SK-N-SH (cell line): ENCODE measurements at regions of chrX and their contacts with region 1.

Region 1: DNA sequence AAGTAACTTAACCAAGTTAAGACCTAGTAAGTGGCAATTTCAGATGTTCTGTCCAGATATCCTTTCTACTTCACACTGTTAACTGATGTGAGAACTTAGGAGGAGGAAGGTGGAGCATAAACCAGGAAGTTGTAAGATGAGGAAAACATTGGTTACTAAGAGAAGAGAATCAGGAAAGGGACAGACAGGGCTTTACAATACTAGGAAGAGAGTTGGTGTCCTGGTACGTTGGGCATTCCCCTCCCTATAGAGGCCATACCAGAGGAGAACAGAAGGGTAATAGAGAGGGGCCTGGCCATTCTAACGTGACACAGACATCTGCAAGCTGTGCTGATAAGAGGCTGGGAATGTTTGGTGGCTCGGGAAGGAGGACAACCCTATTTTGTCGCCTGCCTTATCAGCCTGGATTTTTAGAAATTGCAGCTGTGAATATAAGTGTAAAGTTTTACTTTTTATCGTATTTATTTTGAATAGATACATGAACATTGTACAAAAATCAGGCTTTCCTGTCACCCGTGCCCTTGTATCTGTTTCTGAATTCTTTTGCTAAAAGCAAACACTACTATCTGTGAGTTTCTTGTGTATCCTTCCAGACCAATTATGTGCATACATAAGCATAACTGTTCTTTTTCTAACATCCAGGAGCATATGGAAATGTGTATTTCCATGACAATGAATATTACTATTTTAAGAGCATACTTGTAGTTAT is 53.5 kb upstream of the HPRT1 start:
- DNase-seq: peak; percentile 44
- H3K4me3 ChIP-seq: no peak overlapping the region
- H3K27ac ChIP-seq: no peak overlapping the region
- H3K4me1 ChIP-seq: peaks cover 0 to 6% of the 10 kb centered on the region in 2 experiments; a peak in 2 of 4 replicates
- H3K27me3 ChIP-seq: no peaks in the 10 kb centered on the region
- CTCF ChIP-seq: no peak
- EP300 ChIP-seq: no peak
- RAD21 ChIP-seq: no peak

Region 2: GRCh38 chrX:134396174-134396573 is 10.3 kb before region 1 on chrX:
- CTCF ChIA-PET with region 1: interaction called, 22 read pairs
- POLR2A ChIA-PET with region 1: no interaction called
- DNase-seq: peak; percentile 38
- H3K4me3 ChIP-seq: no peak overlapping the region
- H3K27ac ChIP-seq: peak overlapping the region in 1 of 2 experiments; percentile 58; a peak in 1 of 4 replicates
- H3K4me1 ChIP-seq: no peaks in the 10 kb centered on the region; a peak in 1 of 4 replicates
- H3K27me3 ChIP-seq: no peaks in the 10 kb centered on the region
- CTCF ChIP-seq: peak; percentile 93
- EP300 ChIP-seq: no peak
- RAD21 ChIP-seq: peak; percentile 71

Region 3: DNA sequence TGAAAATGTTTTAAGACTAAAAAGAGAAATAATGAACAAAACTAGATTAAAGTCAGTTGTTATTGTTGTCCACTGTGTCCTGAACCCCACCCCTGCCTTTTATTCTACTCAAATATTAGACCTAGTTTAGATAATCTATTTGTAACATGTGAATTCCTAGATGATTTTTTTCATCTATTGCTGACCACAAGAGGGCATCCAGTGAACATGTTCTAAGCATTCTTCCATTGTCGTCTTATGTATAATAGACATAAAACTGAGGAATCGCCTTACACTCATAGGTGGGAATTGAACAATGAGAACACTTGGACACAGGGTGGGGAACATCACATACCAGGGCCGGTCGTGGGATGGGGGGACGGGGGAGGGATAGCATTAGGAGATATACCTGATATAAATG is 17.1 kb after region 1 on chrX:
- CTCF ChIA-PET with region 1: interaction called, 10 read pairs
- POLR2A ChIA-PET with region 1: no interaction called
- DNase-seq: peak; percentile 5
- H3K4me3 ChIP-seq: no peak overlapping the region
- H3K27ac ChIP-seq: no peak overlapping the region
- H3K4me1 ChIP-seq: no peaks in the 10 kb centered on the region
- H3K27me3 ChIP-seq: no peaks in the 10 kb centered on the region
- CTCF ChIP-seq: peak; percentile 70
- EP300 ChIP-seq: no peak
- RAD21 ChIP-seq: peak; percentile 62

Region 4: DNA sequence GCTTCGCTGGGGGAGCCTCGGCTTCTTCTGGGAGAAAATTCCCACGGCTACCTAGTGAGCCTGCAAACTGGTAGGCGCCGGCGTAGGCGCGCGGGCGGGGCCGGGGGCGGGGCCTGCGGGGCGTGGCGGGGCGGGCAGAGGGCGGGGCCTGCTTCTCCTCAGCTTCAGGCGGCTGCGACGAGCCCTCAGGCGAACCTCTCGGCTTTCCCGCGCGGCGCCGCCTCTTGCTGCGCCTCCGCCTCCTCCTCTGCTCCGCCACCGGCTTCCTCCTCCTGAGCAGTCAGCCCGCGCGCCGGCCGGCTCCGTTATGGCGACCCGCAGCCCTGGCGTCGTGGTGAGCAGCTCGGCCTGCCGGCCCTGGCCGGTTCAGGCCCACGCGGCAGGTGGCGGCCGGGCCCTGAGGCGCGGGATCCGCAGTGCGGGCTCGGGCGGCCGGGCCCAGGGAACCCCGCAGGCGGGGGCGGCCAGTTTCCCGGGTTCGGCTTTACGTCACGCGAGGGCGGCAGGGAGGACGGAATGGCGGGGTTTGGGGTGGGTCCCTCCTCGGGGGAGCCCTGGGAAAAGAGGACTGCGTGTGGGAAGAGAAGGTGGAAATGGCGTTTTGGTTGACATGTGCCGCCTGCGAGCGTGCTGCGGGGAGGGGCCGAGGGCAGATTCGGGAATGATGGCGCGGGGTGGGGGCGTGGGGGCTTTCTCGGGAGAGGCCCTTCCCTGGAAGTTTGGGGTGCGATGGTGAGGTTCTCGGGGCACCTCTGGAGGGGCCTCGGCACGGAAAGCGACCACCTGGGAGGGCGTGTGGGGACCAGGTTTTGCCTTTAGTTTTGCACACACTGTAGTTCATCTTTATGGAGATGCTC is 53.7 kb after region 1 on chrX and contains the start of gene HPRT1:
- CTCF ChIA-PET with region 1: no interaction called
- POLR2A ChIA-PET with region 1: no interaction called
- DNase-seq: peak; percentile 83
- H3K4me3 ChIP-seq: peak within 1 kb of the TSS; percentile 69 to 79
- H3K27ac ChIP-seq: peak within 1 kb of the TSS; percentile 52 to 59; a peak in 3 of 4 replicates
- H3K4me1 ChIP-seq: no peaks in the 10 kb centered on the region; a peak in 1 of 4 replicates
- H3K27me3 ChIP-seq: no peaks in the 10 kb centered on the region; the same call in 1 of the 2 replicates
- CTCF ChIP-seq: no peak
- EP300 ChIP-seq: no peak
- RAD21 ChIP-seq: no peak
- polyA plus RNA-seq, gene HPRT1: 33.2 and 42.3 TPM in 2 replicates